PC-9 (cell line): ENCODE measurements at regions of chr19 and their contacts with region 1.

Region 1: GRCh38 chr19:18328340-18329034 is 5.6 kb upstream of the LSM4 start:
- DNase-seq: peak; percentile 87 to 94
- H3K4me3 ChIP-seq: peak overlapping the region; percentile 51
- H3K27ac ChIP-seq: peak overlapping the region; percentile 39
- H3K4me1 ChIP-seq: peaks cover 36% of the 10 kb centered on the region
- H3K27me3 ChIP-seq: no peaks in the 10 kb centered on the region
- CTCF ChIP-seq: peak; percentile 96

Region 2: DNA sequence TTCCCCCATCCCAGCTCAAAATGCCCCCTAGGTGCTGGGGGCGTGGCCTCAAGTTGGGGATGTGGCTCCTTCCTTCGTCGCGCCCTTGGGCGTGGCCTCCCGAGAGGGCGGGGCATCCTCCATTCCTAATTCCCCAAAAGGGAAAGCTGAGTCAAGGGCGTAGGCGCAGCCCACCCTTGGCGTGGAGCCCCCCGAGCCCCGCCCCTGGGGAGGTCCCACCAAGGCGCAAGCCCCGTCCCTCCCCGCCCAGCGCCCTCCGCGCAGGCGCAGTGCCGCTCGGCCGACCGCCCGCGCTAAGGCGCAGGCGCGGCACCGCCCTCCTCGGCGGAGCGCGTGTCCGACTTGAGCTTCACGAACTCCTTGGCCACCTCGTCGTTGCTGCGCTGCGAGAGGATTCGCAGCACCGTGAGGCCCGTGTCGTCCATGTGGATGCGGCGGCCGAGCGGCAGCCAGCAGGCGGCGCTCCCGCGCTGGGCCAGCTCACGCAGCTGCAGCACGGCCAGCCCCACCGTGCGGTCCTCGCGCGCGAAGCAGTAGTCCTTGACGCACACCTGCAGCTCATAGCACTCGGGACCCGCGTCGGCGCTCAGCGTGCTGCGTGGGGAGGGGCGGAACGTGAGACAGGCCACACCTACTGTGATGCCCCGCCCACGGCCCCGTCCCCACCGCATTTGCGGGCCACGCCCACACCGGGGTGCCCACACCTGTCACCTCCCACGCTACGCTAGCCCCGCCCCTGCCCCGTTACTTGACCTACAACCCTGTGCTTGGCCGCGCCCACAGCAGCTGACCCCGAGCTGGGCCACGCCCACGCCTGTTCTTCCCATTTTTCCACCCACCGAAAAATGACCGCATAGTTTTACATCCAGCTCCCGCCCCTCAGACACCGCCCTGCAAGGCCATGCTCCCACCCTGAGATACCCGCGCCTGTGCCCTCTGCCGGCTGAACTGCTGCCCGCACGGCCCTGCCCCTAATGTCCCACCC is 722.4 kb before region 1 on chr19:
- CTCF ChIA-PET with region 1: no interaction called
- POLR2A ChIA-PET with region 1: no interaction called
- intact Hi-C with region 1: no loop called
- DNase-seq: peak; percentile 77 to 85
- H3K4me3 ChIP-seq: peak overlapping the region; percentile 58
- H3K27ac ChIP-seq: peak overlapping the region; percentile 62
- H3K4me1 ChIP-seq: no peaks in the 10 kb centered on the region
- H3K27me3 ChIP-seq: peaks cover 33% of the 10 kb centered on the region
- CTCF ChIP-seq: peak; percentile 69

Region 3: DNA sequence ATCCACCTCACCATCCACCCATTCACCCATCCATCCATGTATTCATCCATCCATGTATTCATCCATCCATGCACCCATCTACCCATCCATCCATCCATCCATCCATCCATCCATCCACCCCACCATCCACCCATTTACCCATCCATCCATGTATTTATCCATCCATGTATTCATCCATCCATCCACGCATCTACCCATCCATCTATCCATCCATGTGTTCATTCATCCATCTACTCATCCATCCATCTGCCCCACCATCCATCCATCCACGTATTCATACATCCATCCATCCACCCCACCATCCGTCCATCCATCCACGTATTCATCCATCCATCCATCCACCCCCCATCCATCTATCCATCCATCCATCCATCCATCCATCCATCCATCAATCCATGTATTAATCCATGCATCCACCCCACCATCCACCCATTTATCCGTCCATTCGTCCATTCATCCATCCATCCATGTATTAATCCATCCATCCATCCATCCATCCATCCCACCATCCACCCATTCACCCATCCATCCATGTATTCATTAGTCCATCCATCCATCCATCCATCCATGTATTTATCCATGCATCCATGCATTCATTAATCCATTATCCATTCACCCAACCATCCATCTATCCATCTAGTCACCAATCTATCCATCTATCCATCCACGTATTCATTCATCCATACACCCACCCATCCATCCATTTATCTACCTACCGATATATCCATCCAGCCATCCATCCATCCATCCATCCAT is 244.4 kb before region 1 on chr19:
- CTCF ChIA-PET with region 1: no interaction called
- POLR2A ChIA-PET with region 1: no interaction called
- intact Hi-C with region 1: no loop called
- DNase-seq: no peak
- H3K4me3 ChIP-seq: no peak overlapping the region
- H3K27ac ChIP-seq: no peak overlapping the region
- H3K4me1 ChIP-seq: no peaks in the 10 kb centered on the region
- H3K27me3 ChIP-seq: peaks cover 11% of the 10 kb centered on the region; the same call in 1 of the 2 replicates
- CTCF ChIP-seq: no peak

Region 4: DNA sequence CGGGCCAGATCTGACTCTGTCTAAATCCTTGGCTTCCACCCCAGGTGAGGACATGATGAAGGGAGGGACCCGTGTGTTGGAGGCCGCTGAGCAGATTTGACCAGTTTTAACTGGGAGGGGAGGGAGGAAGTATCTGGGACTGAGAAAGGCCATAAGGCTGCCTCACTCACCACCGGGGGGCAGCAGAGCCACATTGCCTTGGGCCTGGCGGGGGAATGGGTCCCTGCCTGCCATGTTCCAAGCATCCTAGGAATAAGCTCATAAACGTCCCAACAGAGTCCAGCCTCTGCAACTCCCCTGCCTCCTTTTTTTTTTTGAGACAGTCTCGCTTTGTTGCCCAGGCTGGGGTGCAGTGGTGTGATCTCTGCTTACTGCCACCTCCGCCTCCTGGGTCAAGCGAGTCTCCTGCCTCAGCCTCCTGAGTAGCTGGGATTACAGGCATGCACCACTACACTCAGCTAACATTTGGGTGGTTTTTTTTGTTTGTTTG is 215.5 kb before region 1 on chr19:
- CTCF ChIA-PET with region 1: interaction called, 6 read pairs
- POLR2A ChIA-PET with region 1: no interaction called
- intact Hi-C with region 1: loop called (anchors 5 kb)
- DNase-seq: peak; percentile 63 to 82
- H3K4me3 ChIP-seq: no peak overlapping the region
- H3K27ac ChIP-seq: no peak overlapping the region
- H3K4me1 ChIP-seq: peaks cover 17% of the 10 kb centered on the region
- H3K27me3 ChIP-seq: no peaks in the 10 kb centered on the region
- CTCF ChIP-seq: peak; percentile 89

Region 5: GRCh38 chr19:18251587-18252369 is 76.7 kb before region 1 on chr19:
- CTCF ChIA-PET with region 1: interaction called, 13 read pairs
- POLR2A ChIA-PET with region 1: interaction called, 5 read pairs
- intact Hi-C with region 1: no loop called
- DNase-seq: peak; percentile 64 to 70
- H3K4me3 ChIP-seq: no peak overlapping the region
- H3K27ac ChIP-seq: no peak overlapping the region
- H3K4me1 ChIP-seq: peaks cover 39% of the 10 kb centered on the region
- H3K27me3 ChIP-seq: no peaks in the 10 kb centered on the region
- CTCF ChIP-seq: peak; percentile 100

Region 6: DNA sequence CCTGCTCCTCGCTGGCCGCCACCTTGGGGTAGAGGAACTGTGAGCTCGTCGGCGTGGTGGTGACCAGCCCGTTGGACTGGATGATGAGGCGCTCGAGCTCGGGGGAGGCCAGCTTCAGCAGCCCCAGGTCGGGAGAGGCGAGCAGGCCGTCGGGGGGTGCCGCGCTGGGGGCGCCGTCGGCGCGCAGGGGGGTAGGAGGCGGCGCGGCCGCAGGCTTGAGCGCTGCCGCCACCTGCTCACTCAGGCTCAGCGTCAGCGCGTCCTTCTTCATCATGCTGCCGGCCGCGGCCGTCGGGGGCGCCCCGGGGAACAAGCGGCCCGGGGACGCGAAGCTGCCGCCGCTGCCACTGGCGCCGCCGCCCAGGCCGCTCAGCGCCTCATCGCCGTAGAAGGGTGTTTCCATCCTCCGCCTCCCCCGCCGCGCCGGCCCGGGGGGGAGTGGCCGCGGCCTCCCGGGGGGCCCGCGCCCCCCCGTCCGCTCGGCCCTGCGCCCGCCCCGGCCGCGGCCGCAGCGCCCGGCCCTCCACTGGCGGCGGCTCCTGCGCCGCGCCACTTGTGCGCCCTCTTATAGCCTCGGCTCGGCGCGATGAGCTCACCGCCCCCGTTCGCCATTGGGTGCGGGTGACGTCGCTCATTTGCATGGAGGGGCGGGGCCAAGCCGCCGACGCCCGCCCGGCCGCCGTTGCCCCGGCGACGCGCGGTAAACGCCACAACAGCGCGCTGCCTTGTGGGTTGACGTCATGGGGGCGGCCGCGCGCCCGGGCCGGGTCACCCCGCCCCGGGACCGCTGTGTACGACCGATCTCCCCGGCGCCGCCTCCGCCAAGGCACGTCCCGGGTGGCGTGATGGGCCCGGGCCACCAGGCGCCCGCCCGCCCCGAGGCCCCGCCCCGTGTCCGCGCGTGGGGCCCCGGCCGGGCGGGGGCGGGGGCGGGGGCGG is 47.1 kb before region 1 on chr19 and contains the start of gene JUND:
- CTCF ChIA-PET with region 1: interaction called, 46 read pairs
- POLR2A ChIA-PET with region 1: interaction called, 85 read pairs
- intact Hi-C with region 1: loop called (anchors 1 kb)
- DNase-seq: peak; percentile 91 to 99
- H3K4me3 ChIP-seq: peak within 1 kb of the TSS; percentile 93
- H3K27ac ChIP-seq: peak within 1 kb of the TSS; percentile 97
- H3K4me1 ChIP-seq: peaks cover 21% of the 10 kb centered on the region
- H3K27me3 ChIP-seq: no peaks in the 10 kb centered on the region
- CTCF ChIP-seq: no peak
- total RNA-seq, gene JUND: 115 and 150 TPM in 2 replicates

Region 7: GRCh38 chr19:18388100-18388959 is 59.8 kb after region 1 on chr19:
- CTCF ChIA-PET with region 1: interaction called, 3 read pairs
- POLR2A ChIA-PET with region 1: interaction called, 13 read pairs
- intact Hi-C with region 1: no loop called
- DNase-seq: peak; percentile 69 to 74
- H3K4me3 ChIP-seq: peak overlapping the region; percentile 91
- H3K27ac ChIP-seq: peak overlapping the region; percentile 73; the same call in 1 of the 2 replicates
- H3K4me1 ChIP-seq: peaks cover 15% of the 10 kb centered on the region
- H3K27me3 ChIP-seq: no peaks in the 10 kb centered on the region
- CTCF ChIP-seq: peak; percentile 99